WTC11 (cell line): ENCODE measurements at regions of chr5 and their contacts with region 1.

Region 1: GRCh38 chr5:172939071-172939470 is 20.2 kb upstream of the RPL26L1 start:
- DNase-seq: peak; percentile 74
- ATAC-seq: peak; percentile 82
- H3K4me3 Mint-ChIP-seq: no peak overlapping the region
- H3K27ac Mint-ChIP-seq: no peak overlapping the region
- H3K4me1 Mint-ChIP-seq: peaks cover 15% of the 10 kb centered on the region
- H3K27me3 Mint-ChIP-seq: no peaks in the 10 kb centered on the region
- CTCF ChIP-seq: peak; percentile 46

Region 2: DNA sequence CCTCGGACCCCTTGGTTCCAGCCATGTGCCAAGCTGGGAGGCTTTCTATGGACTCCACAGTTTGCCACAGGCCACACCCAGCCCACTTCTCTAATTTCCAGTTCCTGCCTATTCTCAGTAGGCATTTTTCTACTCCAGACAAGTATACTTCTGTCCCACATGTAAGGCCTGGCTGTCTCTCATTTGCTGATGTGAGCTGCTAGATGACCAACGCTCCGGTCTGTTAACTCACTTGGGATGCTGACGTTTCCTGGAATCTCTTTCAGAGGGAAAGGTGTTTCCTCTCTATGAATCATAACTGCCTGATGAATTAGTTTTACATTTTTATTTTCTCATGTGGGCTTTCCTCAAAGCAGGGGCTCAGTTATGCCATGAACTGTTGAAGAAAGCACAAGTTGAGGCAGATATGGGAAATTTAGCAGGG is 68.8 kb before region 1 on chr5:
- CTCF ChIA-PET with region 1: interaction called, 11 read pairs
- POLR2A ChIA-PET with region 1: no interaction called
- DNase-seq: no peak
- ATAC-seq: no peak
- H3K4me3 Mint-ChIP-seq: no peak overlapping the region
- H3K27ac Mint-ChIP-seq: no peak overlapping the region
- H3K4me1 Mint-ChIP-seq: peaks cover 58% of the 10 kb centered on the region
- H3K27me3 Mint-ChIP-seq: no peaks in the 10 kb centered on the region
- CTCF ChIP-seq: no peak

Region 3: GRCh38 chr5:172951791-172952511 is 12.9 kb after region 1 on chr5:
- CTCF ChIA-PET with region 1: interaction called, 16 read pairs
- POLR2A ChIA-PET with region 1: no interaction called
- DNase-seq: no peak
- ATAC-seq: no peak
- H3K4me3 Mint-ChIP-seq: no peak overlapping the region
- H3K27ac Mint-ChIP-seq: no peak overlapping the region
- H3K4me1 Mint-ChIP-seq: no peaks in the 10 kb centered on the region
- H3K27me3 Mint-ChIP-seq: peaks cover 28% of the 10 kb centered on the region
- CTCF ChIP-seq: no peak

Region 4: GRCh38 chr5:172958331-172959046 is 19.4 kb after region 1 on chr5:
- CTCF ChIA-PET with region 1: interaction called, 19 read pairs
- POLR2A ChIA-PET with region 1: interaction called, 3 read pairs
- DNase-seq: peak; percentile 63
- ATAC-seq: peak; percentile 83
- H3K4me3 Mint-ChIP-seq: peak overlapping the region; percentile 89
- H3K27ac Mint-ChIP-seq: no peak overlapping the region
- H3K4me1 Mint-ChIP-seq: peaks cover 9% of the 10 kb centered on the region
- H3K27me3 Mint-ChIP-seq: peaks cover 42% of the 10 kb centered on the region
- CTCF ChIP-seq: no peak